Caco-2 (cell line): ENCODE measurements at regions of chr13 and their contacts with region 1.

Region 1: GRCh38 chr13:113275387-113275786 is 21.7 kb upstream of the LAMP1 start:
- DNase-seq: peak; percentile 77 to 78
- H3K4me3 ChIP-seq: no peak overlapping the region
- H3K4me3 Mint-ChIP-seq: no peak overlapping the region
- H3K27ac Mint-ChIP-seq: peak overlapping the region; percentile 10
- H3K4me1 ChIP-seq: peaks cover 17% of the 10 kb centered on the region
- H3K4me1 Mint-ChIP-seq: peaks cover 18% of the 10 kb centered on the region
- H3K27me3 ChIP-seq: no peaks in the 10 kb centered on the region
- H3K27me3 Mint-ChIP-seq: no peaks in the 10 kb centered on the region
- CTCF ChIP-seq: peak; percentile 53 to 83

Region 2: GRCh38 chr13:113220877-113221276 is 54.5 kb before region 1 on chr13:
- CTCF ChIA-PET with region 1: no interaction called
- POLR2A ChIA-PET with region 1: no interaction called
- intact Hi-C with region 1: no loop called
- DNase-seq: no peak
- H3K4me3 ChIP-seq: no peak overlapping the region
- H3K4me3 Mint-ChIP-seq: no peak overlapping the region
- H3K27ac Mint-ChIP-seq: peak overlapping the region; percentile 60
- H3K4me1 ChIP-seq: peaks cover 30% of the 10 kb centered on the region
- H3K4me1 Mint-ChIP-seq: peaks cover 10% of the 10 kb centered on the region
- H3K27me3 ChIP-seq: no peaks in the 10 kb centered on the region
- H3K27me3 Mint-ChIP-seq: no peaks in the 10 kb centered on the region
- CTCF ChIP-seq: peak in 1 of 2 experiments; percentile 25

Region 3: GRCh38 chr13:113296842-113297369 is 21.5 kb after region 1 on chr13 and contains the start of gene LAMP1:
- CTCF ChIA-PET with region 1: no interaction called
- POLR2A ChIA-PET with region 1: no interaction called
- intact Hi-C with region 1: loop called (anchors 1 kb)
- DNase-seq: peak; percentile 99 to 100
- H3K4me3 ChIP-seq: peak within 1 kb of the TSS; percentile 53
- H3K4me3 Mint-ChIP-seq: peak within 1 kb of the TSS; percentile 81
- H3K27ac Mint-ChIP-seq: peak within 1 kb of the TSS; percentile 82
- H3K4me1 ChIP-seq: peaks cover 8% of the 10 kb centered on the region
- H3K4me1 Mint-ChIP-seq: peaks cover 15% of the 10 kb centered on the region
- H3K27me3 ChIP-seq: no peaks in the 10 kb centered on the region
- H3K27me3 Mint-ChIP-seq: no peaks in the 10 kb centered on the region
- CTCF ChIP-seq: peak in 1 of 2 experiments; percentile 5
- total RNA-seq, gene LAMP1: 244 and 245 TPM in 2 replicates

Region 4: GRCh38 chr13:113373811-113374485 is 98.6 kb after region 1 on chr13:
- CTCF ChIA-PET with region 1: interaction called, 3 read pairs
- POLR2A ChIA-PET with region 1: no interaction called
- intact Hi-C with region 1: loop called (anchors 1 kb)
- DNase-seq: no peak
- H3K4me3 ChIP-seq: no peak overlapping the region
- H3K4me3 Mint-ChIP-seq: no peak overlapping the region
- H3K27ac Mint-ChIP-seq: no peak overlapping the region
- H3K4me1 ChIP-seq: no peaks in the 10 kb centered on the region
- H3K4me1 Mint-ChIP-seq: no peaks in the 10 kb centered on the region
- H3K27me3 ChIP-seq: no peaks in the 10 kb centered on the region
- H3K27me3 Mint-ChIP-seq: no peaks in the 10 kb centered on the region
- CTCF ChIP-seq: no peak